ENCODE measurements at regions of chr12 and their contacts with region 1.

Region 1: GRCh38 chr12:117212563-117213190 is 22.4 kb upstream of the FBXO21 start:
- DNase-seq: peak; percentile 34 to 88
- H3K4me3 ChIP-seq: no peak overlapping the region
- H3K27ac ChIP-seq: no peak overlapping the region
- H3K4me1 ChIP-seq: peaks cover 0 to 4% (median 2%) of the 10 kb centered on the region in 4 experiments; a peak in 2 of 7 replicates
- H3K27me3 ChIP-seq: no peaks in the 10 kb centered on the region
- CTCF ChIP-seq: peak; percentile 66 to 92 (median 87)
- EP300 ChIP-seq: no peak
- POLR2A ChIP-seq: no peak
- RAD21 ChIP-seq: peak; percentile 97 to 98

Region 2: GRCh38 chr12:117202556-117202955 is 10.1 kb before region 1 on chr12:
- CTCF ChIA-PET with region 1: interaction called, 16 read pairs
- POLR2A ChIA-PET with region 1: no interaction called
- DNase-seq: no peak
- H3K4me3 ChIP-seq: no peak overlapping the region
- H3K27ac ChIP-seq: no peak overlapping the region
- H3K4me1 ChIP-seq: peaks cover 0 to 4% (median 2%) of the 10 kb centered on the region in 4 experiments; a peak in 3 of 7 replicates
- H3K27me3 ChIP-seq: no peaks in the 10 kb centered on the region; a peak in 1 of 7 replicates
- CTCF ChIP-seq: no peak
- EP300 ChIP-seq: no peak
- POLR2A ChIP-seq: no peak
- RAD21 ChIP-seq: no peak

Region 3: GRCh38 chr12:117228239-117228638 is 15.6 kb after region 1 on chr12:
- CTCF ChIA-PET with region 1: interaction called, 65 read pairs
- POLR2A ChIA-PET with region 1: interaction called, 3 read pairs
- DNase-seq: no peak
- H3K4me3 ChIP-seq: no peak overlapping the region
- H3K27ac ChIP-seq: no peak overlapping the region
- H3K4me1 ChIP-seq: no peaks in the 10 kb centered on the region
- H3K27me3 ChIP-seq: no peaks in the 10 kb centered on the region
- CTCF ChIP-seq: no peak
- EP300 ChIP-seq: no peak
- POLR2A ChIP-seq: no peak
- RAD21 ChIP-seq: no peak

Region 4: GRCh38 chr12:117587631-117588287 is 375.1 kb after region 1 on chr12:
- CTCF ChIA-PET with region 1: interaction called, 11 read pairs
- POLR2A ChIA-PET with region 1: no interaction called
- DNase-seq: peak; percentile 36 to 89
- H3K4me3 ChIP-seq: no peak overlapping the region
- H3K27ac ChIP-seq: no peak overlapping the region
- H3K4me1 ChIP-seq: peaks cover 6 to 10% (median 7%) of the 10 kb centered on the region in 4 experiments
- H3K27me3 ChIP-seq: no peaks in the 10 kb centered on the region
- CTCF ChIP-seq: peak; percentile 84 to 96 (median 92)
- EP300 ChIP-seq: no peak
- POLR2A ChIP-seq: no peak
- RAD21 ChIP-seq: peak; percentile 81 to 83

Region 5: GRCh38 chr12:117850048-117850447 is 637.4 kb after region 1 on chr12:
- CTCF ChIA-PET with region 1: interaction called, 24 read pairs
- POLR2A ChIA-PET with region 1: no interaction called
- DNase-seq: peak; percentile 29 to 57
- H3K4me3 ChIP-seq: no peak overlapping the region
- H3K27ac ChIP-seq: no peak overlapping the region
- H3K4me1 ChIP-seq: peaks cover 0 to 10% (median 3%) of the 10 kb centered on the region in 4 experiments; a peak in 4 of 7 replicates
- H3K27me3 ChIP-seq: no peaks in the 10 kb centered on the region
- CTCF ChIP-seq: peak; percentile 63 to 98 (median 94)
- EP300 ChIP-seq: no peak
- POLR2A ChIP-seq: no peak
- RAD21 ChIP-seq: peak; percentile 77 to 81

Region 6: DNA sequence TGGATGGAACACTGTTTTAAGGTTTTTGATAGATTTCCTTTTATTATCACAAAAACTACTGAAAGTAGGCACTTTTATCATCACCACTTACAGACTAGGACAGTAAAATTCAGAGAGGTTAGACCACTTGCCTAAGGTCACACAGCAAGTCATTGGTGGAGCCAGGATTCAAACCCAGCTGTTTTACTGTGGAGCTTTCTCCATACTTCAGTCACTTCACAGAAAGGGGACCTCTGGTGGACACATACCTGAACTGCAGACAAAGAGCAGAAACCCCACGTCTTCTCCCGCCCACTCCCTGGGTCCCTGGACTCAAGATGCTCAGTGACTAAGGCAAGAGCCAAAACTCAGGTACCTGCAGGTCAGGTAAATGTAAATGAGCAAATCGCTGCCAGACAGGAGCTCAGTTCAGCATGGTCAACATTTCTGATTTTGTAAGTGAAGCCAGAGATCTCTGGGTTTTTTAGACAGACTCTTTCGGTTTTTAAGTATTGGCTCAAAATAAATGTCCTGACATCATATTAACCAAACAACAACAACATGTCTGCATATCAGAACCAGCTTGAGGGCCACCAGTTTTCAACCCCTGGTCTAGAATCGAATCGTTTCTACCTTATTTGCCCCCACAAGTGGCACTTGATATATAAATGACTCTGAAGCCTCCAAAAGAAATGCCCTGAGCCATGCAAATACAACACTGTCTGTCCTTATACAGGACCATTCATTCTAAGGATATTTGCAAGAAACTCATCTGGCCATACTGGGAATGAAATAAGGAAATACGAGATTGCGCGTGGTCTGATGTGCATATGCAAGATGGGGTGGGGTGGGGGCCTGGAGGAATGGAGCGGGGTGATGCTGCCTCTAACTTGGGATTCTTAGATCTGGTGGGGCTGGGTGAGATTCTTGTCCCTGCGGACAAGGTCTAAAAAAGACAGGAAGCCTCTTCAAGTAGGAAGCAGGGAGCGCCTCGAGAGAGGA is 645.2 kb after region 1 on chr12:
- CTCF ChIA-PET with region 1: interaction called, 13 read pairs
- POLR2A ChIA-PET with region 1: no interaction called
- DNase-seq: peak; percentile 49 to 87
- H3K4me3 ChIP-seq: no peak overlapping the region
- H3K27ac ChIP-seq: no peak overlapping the region
- H3K4me1 ChIP-seq: no peaks in the 10 kb centered on the region
- H3K27me3 ChIP-seq: no peaks in the 10 kb centered on the region
- CTCF ChIP-seq: peak; percentile 51 to 86 (median 52)
- EP300 ChIP-seq: no peak
- POLR2A ChIP-seq: no peak
- RAD21 ChIP-seq: peak in 1 of 2 experiments; percentile 41; a peak in 2 of 4 replicates

Measured in H1 (cell line).